AG04449 (cell line): ENCODE measurements at regions of chr15 and their contacts with region 1.

Region 1: DNA sequence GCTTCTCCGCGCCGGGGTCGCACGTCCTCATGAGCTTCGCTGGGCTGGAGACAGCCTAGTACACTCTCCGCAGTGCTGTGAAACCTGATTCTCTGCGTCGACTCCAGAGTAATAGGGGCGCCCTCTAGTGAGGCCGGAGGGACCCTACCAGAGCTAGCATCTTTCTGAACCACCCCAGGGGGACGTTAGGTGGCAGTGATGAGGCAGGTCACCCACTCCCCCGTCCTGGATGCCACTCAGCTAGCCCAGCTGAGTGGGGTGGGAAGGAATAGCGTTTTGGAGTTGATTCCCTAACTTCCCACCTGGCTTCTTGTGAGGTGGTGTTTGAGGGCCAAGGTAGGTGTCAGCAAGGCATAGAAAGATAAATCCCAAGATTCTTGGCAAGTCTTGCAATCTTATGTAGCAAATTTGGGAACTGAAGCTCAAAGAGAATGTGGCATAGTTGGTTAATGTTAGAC is 4.0 kb downstream of the DUOXA2 start:
- DNase-seq: peak; percentile 44
- H3K4me3 ChIP-seq: peak overlapping the region; percentile 18; the same call in 1 of the 2 replicates
- CTCF ChIP-seq: peak; percentile 100

Region 2: GRCh38 chr15:45091161-45091560 is 27.0 kb before region 1 on chr15:
- CTCF ChIA-PET with region 1: interaction called, 39 read pairs
- POLR2A ChIA-PET with region 1: no interaction called
- DNase-seq: peak; percentile 33
- H3K4me3 ChIP-seq: no peak overlapping the region
- CTCF ChIP-seq: no peak

Region 3: GRCh38 chr15:45106002-45106790 is 12.0 kb before region 1 on chr15:
- CTCF ChIA-PET with region 1: interaction called, 23 read pairs
- POLR2A ChIA-PET with region 1: no interaction called
- DNase-seq: no peak
- H3K4me3 ChIP-seq: no peak overlapping the region
- CTCF ChIP-seq: no peak

Region 4: GRCh38 chr15:45148076-45149059 is 30.2 kb after region 1 on chr15:
- CTCF ChIA-PET with region 1: interaction called, 20 read pairs
- POLR2A ChIA-PET with region 1: no interaction called
- DNase-seq: no peak
- H3K4me3 ChIP-seq: no peak overlapping the region
- CTCF ChIP-seq: no peak

Region 5: GRCh38 chr15:45166834-45167630 is 48.9 kb after region 1 on chr15:
- CTCF ChIA-PET with region 1: interaction called, 14 read pairs
- POLR2A ChIA-PET with region 1: interaction called, 3 read pairs
- DNase-seq: peak; percentile 34
- H3K4me3 ChIP-seq: peak overlapping the region; percentile 60
- CTCF ChIP-seq: peak; percentile 77

Region 6: DNA sequence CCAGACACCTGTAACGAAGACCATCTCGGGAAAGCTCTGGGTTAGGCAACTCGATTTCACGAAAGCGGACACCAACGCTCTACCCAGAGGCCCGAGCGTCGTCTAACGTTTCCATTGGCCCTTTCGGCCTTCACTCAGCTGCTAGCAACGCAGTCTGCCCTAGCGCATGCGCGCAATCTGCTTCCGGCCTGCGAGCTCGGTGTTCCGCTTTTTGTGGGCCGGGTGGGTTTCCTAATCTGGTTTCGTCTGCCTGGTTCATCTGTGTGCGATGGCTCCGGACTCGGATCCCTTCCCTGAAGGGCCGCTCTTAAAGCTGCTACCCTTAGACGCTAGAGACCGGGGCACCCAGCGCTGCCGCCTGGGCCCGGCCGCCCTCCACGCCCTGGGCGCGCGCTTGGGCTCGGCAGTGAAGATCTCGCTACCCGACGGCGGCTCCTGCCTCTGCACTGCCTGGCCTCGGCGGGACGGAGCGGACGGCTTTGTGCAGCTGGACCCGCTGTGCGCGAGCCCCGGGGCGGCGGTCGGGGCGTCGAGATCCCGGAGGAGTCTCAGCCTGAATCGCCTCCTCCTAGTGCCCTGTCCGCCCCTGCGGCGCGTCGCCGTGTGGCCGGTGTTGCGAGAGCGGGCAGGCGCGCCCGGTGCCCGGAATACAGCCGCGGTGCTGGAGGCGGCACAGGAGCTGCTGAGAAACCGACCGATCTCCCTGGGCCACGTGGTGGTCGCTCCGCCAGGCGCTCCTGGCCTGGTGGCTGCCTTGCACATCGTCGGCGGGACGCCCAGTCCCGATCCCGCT is 284.2 kb after region 1 on chr15:
- CTCF ChIA-PET with region 1: interaction called, 11 read pairs
- POLR2A ChIA-PET with region 1: no interaction called
- DNase-seq: peak; percentile 93
- H3K4me3 ChIP-seq: peak overlapping the region; percentile 82
- CTCF ChIP-seq: no peak